Ovary (tissue), 10 donors: ENCODE measurements at regions of chr9 and their contacts with region 1.

Region 1: DNA sequence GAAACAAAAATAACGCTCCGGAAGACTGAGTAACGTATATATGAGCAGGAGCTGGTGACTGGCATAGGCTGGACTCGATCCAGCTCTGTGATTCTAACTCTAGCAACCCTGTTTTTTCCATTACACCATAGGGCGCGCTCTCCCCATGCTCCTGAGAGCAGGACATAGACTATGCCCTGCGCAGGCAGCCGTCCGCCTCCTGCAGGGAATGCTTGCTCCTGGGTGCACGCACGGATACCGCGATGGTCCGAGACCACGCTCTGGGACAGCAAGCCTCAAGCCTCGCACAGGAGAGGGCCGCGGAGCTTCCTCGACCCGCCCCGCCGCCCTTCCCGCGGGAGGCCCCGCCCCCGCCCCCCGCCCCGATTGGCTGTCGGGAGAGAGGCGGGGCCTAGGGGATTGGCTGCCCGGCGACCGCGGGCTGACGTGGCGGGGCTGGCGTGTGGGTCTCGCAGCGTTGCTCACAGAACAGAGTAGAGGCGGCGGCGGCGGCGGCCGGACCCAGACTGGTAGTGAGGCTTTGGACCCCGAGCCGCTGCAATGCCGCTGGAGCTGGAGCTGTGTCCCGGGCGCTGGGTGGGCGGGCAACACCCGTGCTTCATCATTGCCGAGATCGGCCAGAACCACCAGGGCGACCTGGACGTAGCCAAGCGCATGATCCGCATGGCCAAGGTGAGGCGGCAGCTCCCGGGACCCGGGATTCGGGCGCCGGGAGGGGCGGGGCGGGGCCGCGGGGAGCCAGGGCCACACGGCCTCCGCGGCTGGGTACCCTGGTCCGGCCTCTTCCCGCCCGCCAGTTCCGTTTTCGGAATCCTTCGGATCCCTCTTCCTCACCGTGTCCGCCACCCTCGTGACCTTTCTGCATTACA is at the start of gene NANS:
- DNase-seq: peak; percentile 90 to 94 (median 93)
- H3K4me3 ChIP-seq: peak within 1 kb of the TSS; percentile 95
- H3K27ac ChIP-seq: peak within 1 kb of the TSS; percentile 40 to 79
- H3K4me1 ChIP-seq: peaks cover 1% of the 10 kb centered on the region
- H3K27me3 ChIP-seq: no peaks in the 10 kb centered on the region
- CTCF ChIP-seq: no peak
- EP300 ChIP-seq: no peak
- POLR2A ChIP-seq: peak; percentile 92
- total RNA-seq, gene NANS: 24.1 to 43.8 (median 33.8) TPM

Region 2: GRCh38 chr9:97703437-97704344 is 352.8 kb before region 1 on chr9:
- intact Hi-C with region 1: loop called in 1 of 4 experiments (anchors 10 kb)
- DNase-seq: peak in 1 of 5 donors; percentile 28
- H3K4me3 ChIP-seq: no peak overlapping the region
- H3K27ac ChIP-seq: no peak overlapping the region
- H3K4me1 ChIP-seq: no peaks in the 10 kb centered on the region
- H3K27me3 ChIP-seq: no peaks in the 10 kb centered on the region
- CTCF ChIP-seq: no peak
- EP300 ChIP-seq: no peak
- POLR2A ChIP-seq: no peak